ENCODE measurements at regions of chrX and their contacts with region 1.

Region 1: DNA sequence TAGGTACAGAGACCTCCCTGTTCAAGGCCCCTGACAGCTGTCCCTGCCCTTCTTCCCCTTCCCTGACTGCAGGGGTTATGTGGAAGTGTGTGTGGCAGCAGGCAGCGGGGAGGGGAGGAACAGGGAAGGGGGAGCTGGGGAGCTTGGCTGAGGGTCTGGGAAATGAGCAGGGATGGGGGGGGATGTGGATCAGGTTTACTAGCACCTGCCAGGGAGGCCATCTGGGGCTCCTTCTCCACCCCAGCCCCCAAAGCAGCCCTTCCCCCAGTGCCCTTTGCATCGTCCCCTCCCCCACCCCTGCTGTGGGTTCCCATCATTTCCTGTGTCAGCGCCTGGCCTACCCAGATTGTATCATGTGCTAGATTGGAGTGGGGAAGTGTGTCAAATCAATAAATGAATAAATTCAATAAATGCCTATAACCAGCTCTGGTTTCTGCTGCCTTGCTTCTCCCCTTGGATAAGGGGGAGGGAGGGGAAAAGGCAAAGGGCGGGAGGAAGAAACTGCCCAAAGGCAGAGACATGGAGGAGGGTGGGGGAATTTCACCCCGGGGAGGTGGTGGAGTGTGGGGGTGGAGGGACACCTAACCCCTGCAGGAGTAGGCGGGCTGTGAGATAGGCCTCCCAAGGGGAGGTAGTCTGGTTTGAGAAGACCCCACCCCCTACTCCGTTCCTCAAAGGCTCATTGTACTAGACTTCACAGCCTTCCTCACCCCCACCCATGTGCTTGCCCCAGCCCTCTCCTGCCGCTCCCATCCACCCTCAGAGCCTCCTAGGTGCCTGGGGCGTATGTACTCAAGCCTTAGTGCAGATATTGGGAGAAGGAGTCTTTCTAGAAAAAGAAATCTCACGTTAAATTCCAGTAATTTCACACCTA is 3.2 kb downstream of the CXorf65 start:
- DNase-seq: peak; percentile 39 to 79 (median 64)
- H3K4me3 ChIP-seq: peak overlapping the region; percentile 46
- H3K4me3 Mint-ChIP-seq: peak overlapping the region; percentile 74 to 90 (median 79)
- H3K27ac ChIP-seq: peak overlapping the region; percentile 54
- H3K27ac Mint-ChIP-seq: peak overlapping the region; percentile 82 to 99 (median 96)
- H3K4me1 ChIP-seq: peaks cover 79% of the 10 kb centered on the region
- H3K4me1 Mint-ChIP-seq: peaks cover 85 to 89% (median 89%) of the 10 kb centered on the region in 3 donors
- H3K27me3 ChIP-seq: no peaks in the 10 kb centered on the region
- H3K27me3 Mint-ChIP-seq: peaks cover 0 to 4% of the 10 kb centered on the region in 2 donors

Region 2: DNA sequence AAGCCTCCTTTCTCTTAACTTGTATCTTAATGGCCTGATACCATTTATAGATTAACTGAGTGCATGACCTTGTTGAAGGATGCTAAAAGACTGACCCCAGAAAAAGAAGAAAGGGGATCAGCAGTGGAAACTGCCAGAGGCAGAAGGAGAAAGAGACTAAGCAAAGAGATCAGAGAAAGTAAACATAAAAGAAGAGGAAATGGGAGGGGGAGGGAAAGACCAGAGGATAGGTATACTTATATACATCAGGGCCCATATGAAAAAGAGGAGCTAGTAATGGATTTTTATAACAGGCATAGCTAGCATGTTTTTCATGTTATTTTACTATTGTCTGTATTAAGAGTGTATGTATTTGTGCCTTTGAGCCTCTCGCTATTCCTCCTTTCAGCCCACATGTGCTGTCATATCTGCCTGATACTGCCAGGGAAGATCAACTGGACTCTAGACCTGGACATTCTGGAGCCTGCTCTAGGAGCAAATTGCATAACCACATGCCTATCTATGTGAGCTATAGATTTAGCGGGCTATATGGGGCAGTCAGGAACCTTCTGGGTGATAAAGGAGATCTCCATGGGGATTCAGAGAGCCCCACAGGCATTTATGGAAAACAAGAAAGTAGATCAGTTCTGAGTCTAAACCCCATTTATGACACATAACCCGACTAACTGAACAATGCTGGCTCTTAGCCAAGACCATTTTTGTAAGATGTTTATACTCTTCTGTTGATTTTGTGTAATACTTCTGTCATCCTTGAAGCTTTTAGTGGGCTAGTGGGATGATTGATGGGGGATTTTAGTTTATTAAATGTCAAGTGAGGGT is 21.8 kb before region 1 on chrX:
- CTCF ChIA-PET with region 1: no interaction called
- POLR2A ChIA-PET with region 1: no interaction called
- DNase-seq: no peak
- H3K4me3 ChIP-seq: no peak overlapping the region
- H3K4me3 Mint-ChIP-seq: no peak overlapping the region
- H3K27ac ChIP-seq: no peak overlapping the region
- H3K27ac Mint-ChIP-seq: peak overlapping the region in 1 of 8 donors; percentile 26
- H3K4me1 ChIP-seq: no peaks in the 10 kb centered on the region
- H3K4me1 Mint-ChIP-seq: no peaks in the 10 kb centered on the region
- H3K27me3 ChIP-seq: no peaks in the 10 kb centered on the region
- H3K27me3 Mint-ChIP-seq: peaks cover 0 to 9% of the 10 kb centered on the region in 2 donors

Region 3: DNA sequence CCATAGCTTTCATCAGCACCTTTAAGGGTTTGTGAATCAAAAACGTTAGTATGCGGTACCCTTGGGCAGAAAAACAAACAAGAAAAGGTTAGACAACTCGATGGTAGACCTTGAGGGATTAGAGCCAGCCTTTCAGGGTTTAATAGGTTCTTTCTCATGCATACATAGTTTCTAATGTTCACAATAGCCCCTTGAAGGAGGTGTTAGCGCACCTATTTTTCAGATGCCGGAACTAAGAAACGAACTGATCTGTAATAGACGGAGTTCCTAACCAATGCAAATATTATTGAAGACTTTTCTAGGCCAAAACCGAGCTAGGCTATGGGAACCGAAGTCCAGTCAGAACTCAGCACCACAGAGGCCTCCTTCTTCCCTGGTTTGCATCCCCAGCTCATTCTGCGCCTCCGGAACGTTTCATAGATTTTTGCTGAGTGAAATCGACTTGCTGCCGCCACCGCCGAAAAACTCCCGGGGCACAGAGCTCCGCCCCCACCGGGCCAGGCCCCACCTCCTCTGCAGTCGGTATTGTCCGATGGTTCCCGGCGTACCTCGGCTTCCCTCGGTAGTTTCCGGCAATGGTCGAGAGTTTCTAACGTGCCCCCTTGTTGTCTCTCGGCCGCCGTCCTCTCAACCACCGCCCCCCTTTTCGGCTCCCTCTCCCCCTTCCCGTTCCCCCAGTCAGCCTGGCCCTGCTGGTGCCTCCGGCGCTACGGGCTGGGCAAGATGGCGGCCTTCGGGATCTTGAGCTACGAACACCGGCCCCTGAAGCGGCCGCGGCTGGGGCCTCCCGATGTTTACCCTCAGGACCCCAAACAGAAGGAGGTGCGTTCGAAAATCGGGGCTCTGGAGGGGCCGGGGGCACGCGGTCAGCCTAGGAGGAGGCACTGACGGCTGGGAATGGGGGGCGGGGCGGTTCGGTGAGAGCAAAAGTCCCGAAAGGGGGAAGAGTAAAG is 15.0 kb after region 1 on chrX and contains the start of gene MED12:
- CTCF ChIA-PET with region 1: interaction called, 41 read pairs
- POLR2A ChIA-PET with region 1: interaction called, 13 read pairs
- DNase-seq: peak; percentile 74 to 86 (median 78)
- H3K4me3 ChIP-seq: peak within 1 kb of the TSS; percentile 73
- H3K4me3 Mint-ChIP-seq: peak within 1 kb of the TSS; percentile 87 to 95 (median 88)
- H3K27ac ChIP-seq: peak within 1 kb of the TSS; percentile 61
- H3K27ac Mint-ChIP-seq: peak within 1 kb of the TSS; percentile 91 to 98 (median 94)
- H3K4me1 ChIP-seq: peaks cover 23% of the 10 kb centered on the region
- H3K4me1 Mint-ChIP-seq: peaks cover 21 to 50% (median 34%) of the 10 kb centered on the region in 3 donors
- H3K27me3 ChIP-seq: no peaks in the 10 kb centered on the region
- H3K27me3 Mint-ChIP-seq: peaks cover 0 to 2% of the 10 kb centered on the region in 2 donors
- total RNA-seq, gene MED12: 49.3 to 61.1 TPM

Region 4: GRCh38 chrX:71128915-71129765 is 25.8 kb after region 1 on chrX:
- CTCF ChIA-PET with region 1: interaction called, 58 read pairs
- POLR2A ChIA-PET with region 1: interaction called, 12 read pairs
- DNase-seq: peak; percentile 65 to 83 (median 71)
- H3K4me3 ChIP-seq: no peak overlapping the region
- H3K4me3 Mint-ChIP-seq: peak overlapping the region in 3 of 7 donors; percentile 1 to 44 (median 12)
- H3K27ac ChIP-seq: no peak overlapping the region
- H3K27ac Mint-ChIP-seq: peak overlapping the region; percentile 52 to 92 (median 86)
- H3K4me1 ChIP-seq: peaks cover 12% of the 10 kb centered on the region
- H3K4me1 Mint-ChIP-seq: peaks cover 10 to 25% (median 18%) of the 10 kb centered on the region in 3 donors
- H3K27me3 ChIP-seq: no peaks in the 10 kb centered on the region
- H3K27me3 Mint-ChIP-seq: peaks cover 0 to 9% of the 10 kb centered on the region in 2 donors

Region 5: DNA sequence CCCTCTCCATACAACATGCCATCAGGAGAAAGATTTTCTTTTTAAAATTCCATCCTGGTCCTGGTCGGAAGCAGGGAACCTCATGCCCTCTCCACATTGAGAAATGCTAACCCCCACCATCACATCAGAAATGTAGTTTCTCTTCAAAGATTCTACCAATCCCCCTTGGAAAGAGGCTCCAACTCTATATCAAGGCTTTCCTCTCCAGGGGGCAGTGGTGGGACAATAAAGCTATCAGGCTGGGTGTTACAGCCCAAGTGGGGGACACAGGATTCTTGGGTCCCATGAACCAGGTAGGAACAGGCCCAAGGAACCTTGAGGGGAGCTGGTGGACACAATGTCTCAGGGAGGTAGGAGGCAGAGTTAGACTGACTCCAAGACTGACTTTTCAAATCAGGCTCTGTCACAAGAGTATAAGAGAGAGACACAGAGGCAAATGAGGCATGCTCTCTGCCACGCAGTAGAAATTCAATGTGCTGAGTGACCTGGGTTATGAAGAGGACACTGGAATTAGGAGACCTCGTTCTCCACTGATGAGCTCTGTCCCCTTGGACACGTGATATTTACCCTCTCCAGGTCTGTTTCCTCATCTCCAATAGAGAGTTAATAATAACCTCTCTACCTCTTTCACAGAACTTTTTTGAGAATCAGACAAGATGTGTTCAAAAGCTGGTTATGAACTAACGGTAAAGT is 124.2 kb after region 1 on chrX:
- CTCF ChIA-PET with region 1: no interaction called
- POLR2A ChIA-PET with region 1: no interaction called
- DNase-seq: no peak
- H3K4me3 ChIP-seq: no peak overlapping the region
- H3K4me3 Mint-ChIP-seq: no peak overlapping the region
- H3K27ac ChIP-seq: no peak overlapping the region
- H3K27ac Mint-ChIP-seq: peak overlapping the region in 2 of 8 donors; percentile 1 to 27
- H3K4me1 ChIP-seq: no peaks in the 10 kb centered on the region
- H3K4me1 Mint-ChIP-seq: no peaks in the 10 kb centered on the region
- H3K27me3 ChIP-seq: no peaks in the 10 kb centered on the region
- H3K27me3 Mint-ChIP-seq: peaks cover 0 to 13% of the 10 kb centered on the region in 2 donors

Measured in CD8-positive, alpha-beta memory T cell (primary cell).